ENCODE measurements at regions of chr7 and their contacts with region 1.

Region 1: DNA sequence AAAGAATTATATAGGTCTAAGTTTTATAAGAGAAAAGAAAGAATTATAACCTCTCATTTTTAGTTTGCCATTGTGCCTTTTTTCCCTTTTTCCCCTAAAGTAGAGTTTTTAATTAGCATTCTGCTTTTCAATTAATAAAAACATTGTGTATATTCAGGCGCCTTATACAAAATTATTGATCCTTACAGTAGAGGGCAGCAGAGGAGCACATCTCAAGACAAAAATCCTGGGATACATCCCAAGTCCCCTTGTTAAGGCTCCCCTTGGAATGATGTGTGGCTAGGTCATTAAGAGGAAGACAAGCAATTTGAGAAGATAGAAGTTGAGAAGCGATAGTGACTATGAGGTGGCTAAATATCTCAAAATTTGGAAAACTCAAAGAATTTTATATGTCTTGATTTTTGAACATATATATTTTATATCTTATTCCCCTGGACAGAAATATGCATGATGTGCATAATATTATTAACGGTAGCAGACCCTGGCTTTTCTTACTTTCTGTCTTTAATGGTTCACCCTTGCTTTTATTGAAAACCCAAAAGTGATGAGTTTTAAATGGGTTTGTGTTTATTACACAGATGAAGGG is 19.1 kb upstream of the TPK1 start:
- DNase-seq: no peak
- ATAC-seq: no peak
- H3K4me3 ChIP-seq: no peak overlapping the region
- H3K27ac ChIP-seq: no peak overlapping the region
- H3K4me1 ChIP-seq: no peaks in the 10 kb centered on the region
- H3K27me3 ChIP-seq: peaks cover 0 to 7% (median 0%) of the 10 kb centered on the region in 7 donors
- CTCF ChIP-seq: peak; percentile 39 to 72 (median 61)

Region 2: DNA sequence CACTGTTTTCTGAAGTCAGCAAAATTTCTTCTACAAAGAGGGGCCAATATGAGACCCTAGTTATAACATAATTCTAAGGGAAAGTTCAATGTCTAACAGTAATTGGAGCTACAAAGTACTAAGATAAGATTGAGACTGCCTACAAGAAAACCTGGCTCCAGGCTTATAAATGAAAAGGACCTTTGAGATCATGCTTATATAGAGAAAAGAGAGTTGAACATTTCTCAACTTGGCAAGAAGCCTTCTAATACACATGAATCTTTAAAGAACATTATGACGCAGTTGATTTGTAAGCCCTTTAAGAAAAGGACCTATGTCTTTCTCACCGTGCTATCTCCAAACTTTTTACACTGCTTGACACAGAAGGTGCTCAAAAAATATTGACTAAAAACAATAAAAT is 107.0 kb before region 1 on chr7:
- intact Hi-C with region 1: loop called in 1 of 10 experiments (anchors 10 kb)
- DNase-seq: no peak
- ATAC-seq: no peak
- H3K4me3 ChIP-seq: no peak overlapping the region
- H3K27ac ChIP-seq: no peak overlapping the region
- H3K4me1 ChIP-seq: no peaks in the 10 kb centered on the region
- H3K27me3 ChIP-seq: no peaks in the 10 kb centered on the region
- CTCF ChIP-seq: no peak

Region 3: GRCh38 chr7:146084086-146084485 is 1229.2 kb after region 1 on chr7:
- intact Hi-C with region 1: loop called in 1 of 10 experiments (anchors 10 kb)
- DNase-seq: no peak
- ATAC-seq: no peak
- H3K4me3 ChIP-seq: no peak overlapping the region
- H3K27ac ChIP-seq: no peak overlapping the region
- H3K4me1 ChIP-seq: no peaks in the 10 kb centered on the region
- H3K27me3 ChIP-seq: no peaks in the 10 kb centered on the region
- CTCF ChIP-seq: no peak

Region 4: DNA sequence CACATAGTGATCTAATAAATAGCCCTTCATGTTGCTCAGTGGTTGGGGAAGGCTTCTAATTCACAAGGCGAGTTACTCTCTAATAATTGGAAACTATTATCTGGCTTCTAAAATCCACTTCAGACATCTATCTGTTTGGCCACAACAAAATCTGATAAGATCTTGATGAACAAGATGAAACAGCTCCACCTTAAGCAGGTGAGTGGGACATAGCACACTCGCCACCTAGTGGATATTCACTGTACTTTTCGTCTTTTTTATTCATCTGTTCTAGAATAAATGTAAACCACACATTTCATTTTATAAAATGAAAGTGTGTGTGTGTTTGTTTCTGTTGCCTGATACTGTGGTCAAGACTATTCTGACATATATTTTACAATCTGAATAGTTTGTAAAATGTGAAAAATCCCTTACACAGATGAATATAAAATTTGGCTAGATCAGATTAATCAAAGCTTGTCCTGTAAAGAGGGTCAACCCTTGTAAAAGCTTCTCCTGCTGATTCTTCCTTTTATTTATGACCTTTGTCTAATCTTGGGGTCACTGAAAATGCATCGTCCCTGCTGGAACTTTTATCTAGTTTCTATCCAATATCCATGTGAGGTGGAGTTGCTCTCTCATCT is 1235.2 kb after region 1 on chr7:
- intact Hi-C with region 1: loop called in 3 of 10 experiments (anchors 5 to 10 kb)
- DNase-seq: no peak
- ATAC-seq: no peak
- H3K4me3 ChIP-seq: no peak overlapping the region
- H3K27ac ChIP-seq: no peak overlapping the region
- H3K4me1 ChIP-seq: no peaks in the 10 kb centered on the region
- H3K27me3 ChIP-seq: peaks cover 0 to 5% (median 0%) of the 10 kb centered on the region in 7 donors
- CTCF ChIP-seq: peak in 8 of 9 donors; percentile 38 to 69 (median 63)

Measured in heart right ventricle (tissue), 16 donors.